HAP-1 (cell line): ENCODE measurements at regions of chr10 and their contacts with region 1.

Region 1: GRCh38 chr10:25701652-25702051 is 232.4 kb upstream of the MYO3A start:
- DNase-seq: peak in 1 of 2 experiments; percentile 23
- H3K4me3 ChIP-seq: no peak overlapping the region
- H3K4me1 ChIP-seq: no peaks in the 10 kb centered on the region
- H3K27me3 ChIP-seq: no peaks in the 10 kb centered on the region

Region 2: GRCh38 chr10:25522946-25523608 is 178.6 kb before region 1 on chr10:
- in situ Hi-C with region 1: loop called (anchors 10 kb)
- DNase-seq: peak; percentile 49 to 77
- H3K4me3 ChIP-seq: no peak overlapping the region
- H3K4me1 ChIP-seq: no peaks in the 10 kb centered on the region
- H3K27me3 ChIP-seq: no peaks in the 10 kb centered on the region